Heart right ventricle (tissue), 16 donors: ENCODE measurements at regions of chr16 and their contacts with region 1.

Region 1: DNA sequence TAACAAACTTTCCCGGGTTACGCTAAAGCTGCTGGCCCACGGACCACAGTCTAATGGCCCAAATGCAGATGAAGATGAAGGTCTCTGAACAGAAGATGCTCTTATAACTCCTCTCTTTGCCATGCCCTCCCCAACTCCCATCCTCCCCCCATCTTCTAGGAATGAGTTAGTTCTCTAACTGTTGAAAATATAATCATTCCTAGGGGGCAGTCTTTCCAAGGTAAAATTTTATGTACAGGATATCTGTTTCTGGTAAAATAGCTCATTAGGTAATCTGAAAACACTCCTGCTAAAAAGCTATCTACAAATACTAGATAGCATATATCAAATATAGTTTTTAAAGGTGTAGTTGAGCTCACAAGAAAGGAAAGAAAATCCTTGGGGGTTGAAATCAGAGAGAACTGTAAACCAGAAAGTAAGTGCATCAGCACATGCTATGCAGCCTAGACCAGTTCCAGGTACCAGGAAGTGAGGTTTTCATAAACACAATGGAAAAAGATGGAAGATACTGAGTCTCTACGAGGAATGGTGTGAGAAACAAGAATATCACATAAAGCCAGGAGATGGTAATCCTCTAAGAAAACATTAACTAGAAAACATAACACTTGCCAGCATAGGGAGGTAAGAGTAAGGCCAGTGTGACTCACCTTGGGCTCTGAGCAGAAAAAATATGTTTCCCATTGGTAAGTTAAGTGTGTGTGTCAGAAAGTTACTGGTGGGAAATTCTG is 38.1 kb downstream of the CMC2 start:
- DNase-seq: no peak
- ATAC-seq: no peak
- H3K4me3 ChIP-seq: no peak overlapping the region
- H3K27ac ChIP-seq: no peak overlapping the region
- H3K4me1 ChIP-seq: no peaks in the 10 kb centered on the region
- H3K27me3 ChIP-seq: no peaks in the 10 kb centered on the region
- CTCF ChIP-seq: no peak

Region 2: GRCh38 chr16:80899809-80900592 is 68.5 kb before region 1 on chr16:
- intact Hi-C with region 1: loop called in 1 of 10 experiments (anchors 10 kb)
- DNase-seq: peak; percentile 83 to 87
- ATAC-seq: peak; percentile 82 to 95 (median 94)
- H3K4me3 ChIP-seq: peak overlapping the region in 6 of 10 donors; percentile 26 to 39 (median 30)
- H3K27ac ChIP-seq: peak overlapping the region in 9 of 10 donors; percentile 9 to 80 (median 67)
- H3K4me1 ChIP-seq: peaks cover 0 to 22% (median 14%) of the 10 kb centered on the region in 9 donors
- H3K27me3 ChIP-seq: no peaks in the 10 kb centered on the region
- CTCF ChIP-seq: no peak